WTC11 (cell line): ENCODE measurements at regions of chr11 and their contacts with region 1.

Region 1: GRCh38 chr11:33161120-33162005 is at the start of gene CSTF3:
- DNase-seq: peak; percentile 100
- ATAC-seq: peak; percentile 97
- H3K4me3 Mint-ChIP-seq: peak within 1 kb of the TSS; percentile 100
- H3K27ac Mint-ChIP-seq: peak within 1 kb of the TSS; percentile 98
- H3K4me1 Mint-ChIP-seq: peaks cover 37% of the 10 kb centered on the region
- H3K27me3 Mint-ChIP-seq: no peaks in the 10 kb centered on the region
- CTCF ChIP-seq: no peak
- total RNA-seq, gene CSTF3: 47.5 to 68.3 TPM (median 50.4 TPM) in 3 replicates

Region 2: GRCh38 chr11:32902089-32902816 is 259.1 kb before region 1 on chr11:
- CTCF ChIA-PET with region 1: no interaction called
- POLR2A ChIA-PET with region 1: no interaction called
- DNase-seq: no peak
- ATAC-seq: no peak
- H3K4me3 Mint-ChIP-seq: no peak overlapping the region
- H3K27ac Mint-ChIP-seq: peak overlapping the region; percentile 23
- H3K4me1 Mint-ChIP-seq: peaks cover 84% of the 10 kb centered on the region
- H3K27me3 Mint-ChIP-seq: no peaks in the 10 kb centered on the region
- CTCF ChIP-seq: no peak

Region 3: GRCh38 chr11:33125611-33126010 is 35.8 kb before region 1 on chr11:
- CTCF ChIA-PET with region 1: no interaction called
- POLR2A ChIA-PET with region 1: no interaction called
- DNase-seq: no peak
- ATAC-seq: no peak
- H3K4me3 Mint-ChIP-seq: no peak overlapping the region
- H3K27ac Mint-ChIP-seq: peak overlapping the region; percentile 72
- H3K4me1 Mint-ChIP-seq: peaks cover 68% of the 10 kb centered on the region
- H3K27me3 Mint-ChIP-seq: no peaks in the 10 kb centered on the region
- CTCF ChIP-seq: no peak

Region 4: DNA sequence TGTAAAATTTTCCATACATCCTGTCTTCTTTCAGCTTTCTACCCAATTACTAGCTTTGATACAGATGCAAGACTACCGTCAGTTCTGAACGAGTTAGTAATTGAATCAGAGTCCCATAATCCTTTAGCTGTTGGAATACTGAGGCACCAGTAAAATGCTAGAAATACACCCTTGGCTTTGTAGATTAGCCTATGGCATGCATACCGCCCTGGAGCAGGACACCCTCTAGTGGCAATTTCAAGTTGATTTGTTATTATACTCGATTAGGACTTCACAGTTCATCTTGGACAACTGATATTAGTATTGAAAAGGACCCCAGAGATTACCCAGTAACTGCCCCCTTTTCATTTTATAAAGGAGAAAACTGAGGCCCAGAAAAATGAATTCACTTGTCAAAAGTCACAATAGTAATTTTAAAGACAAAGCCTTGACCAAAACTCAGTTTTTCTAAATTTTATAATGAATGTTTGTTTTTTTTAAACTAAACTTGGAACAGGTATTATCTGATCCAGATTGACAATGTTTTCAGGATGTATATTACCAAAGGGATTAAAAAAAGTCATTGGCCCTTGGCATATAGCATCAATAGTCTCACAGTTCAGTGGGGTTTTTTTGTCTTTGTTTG is 168.5 kb after region 1 on chr11:
- CTCF ChIA-PET with region 1: interaction called, 25 read pairs
- POLR2A ChIA-PET with region 1: no interaction called
- DNase-seq: peak; percentile 25
- ATAC-seq: peak; percentile 82
- H3K4me3 Mint-ChIP-seq: no peak overlapping the region
- H3K27ac Mint-ChIP-seq: no peak overlapping the region
- H3K4me1 Mint-ChIP-seq: peaks cover 5% of the 10 kb centered on the region
- H3K27me3 Mint-ChIP-seq: no peaks in the 10 kb centered on the region
- CTCF ChIP-seq: no peak